ENCODE measurements at regions of chr10 and their contacts with region 1.

Region 1: GRCh38 chr10:113891476-113891875 is 37.0 kb downstream of the NHLRC2 start:
- DNase-seq: no peak
- H3K4me3 Mint-ChIP-seq: no peak overlapping the region
- H3K27ac Mint-ChIP-seq: no peak overlapping the region
- H3K4me1 Mint-ChIP-seq: peaks cover 7% of the 10 kb centered on the region
- H3K27me3 Mint-ChIP-seq: no peaks in the 10 kb centered on the region
- CTCF ChIP-seq: no peak

Region 2: GRCh38 chr10:114068054-114068707 is 176.7 kb after region 1 on chr10:
- CTCF ChIA-PET with region 1: no interaction called
- POLR2A ChIA-PET with region 1: interaction called, 4 read pairs
- intact Hi-C with region 1: loop called (anchors 10 kb)
- DNase-seq: peak; percentile 81
- H3K4me3 Mint-ChIP-seq: peak overlapping the region; percentile 61
- H3K27ac Mint-ChIP-seq: peak overlapping the region; percentile 36
- H3K4me1 Mint-ChIP-seq: peaks cover 14% of the 10 kb centered on the region
- H3K27me3 Mint-ChIP-seq: no peaks in the 10 kb centered on the region
- CTCF ChIP-seq: no peak

Region 3: DNA sequence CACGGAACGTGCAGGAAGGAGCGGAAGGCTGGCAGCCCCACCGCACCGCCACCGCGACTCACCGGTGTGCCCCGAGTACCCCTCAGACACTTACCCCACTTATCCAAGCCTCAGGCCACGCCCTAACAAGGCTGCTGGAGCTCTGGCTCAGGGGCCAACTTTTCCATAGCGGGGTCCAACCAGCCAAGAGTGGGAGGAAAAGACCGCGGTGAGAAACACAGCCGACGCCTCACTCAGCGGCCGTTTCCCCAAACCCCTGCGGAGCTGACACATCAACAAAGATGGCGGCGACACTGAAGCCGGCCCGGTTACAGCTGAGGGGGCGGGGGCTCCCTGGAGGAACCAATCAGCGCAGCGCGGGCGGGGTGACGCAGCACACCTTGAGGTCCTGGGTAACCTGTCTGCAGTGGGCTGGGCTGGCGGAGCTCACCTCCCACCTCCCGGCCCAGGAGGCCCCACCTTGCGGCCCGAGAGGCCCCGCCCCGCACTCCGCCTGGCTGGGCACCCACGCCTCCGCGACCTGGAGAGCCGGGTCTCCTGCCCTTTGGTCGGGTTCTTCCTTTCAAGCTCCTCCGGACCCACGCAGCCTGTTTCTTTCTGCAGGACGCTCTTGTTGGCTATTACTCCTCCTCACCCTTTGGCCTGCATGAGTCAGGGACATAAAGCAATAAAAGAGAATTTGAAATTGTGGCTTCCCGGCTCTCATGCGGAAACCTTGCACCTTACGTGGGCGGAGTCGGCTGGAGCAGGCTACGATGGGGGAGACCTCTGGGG is 282.6 kb after region 1 on chr10 and contains the start of gene CCDC186:
- CTCF ChIA-PET with region 1: no interaction called
- POLR2A ChIA-PET with region 1: no interaction called
- intact Hi-C with region 1: no loop called
- DNase-seq: peak; percentile 96
- H3K4me3 Mint-ChIP-seq: peak within 1 kb of the TSS; percentile 97
- H3K27ac Mint-ChIP-seq: peak within 1 kb of the TSS; percentile 99
- H3K4me1 Mint-ChIP-seq: peaks cover 6% of the 10 kb centered on the region
- H3K27me3 Mint-ChIP-seq: no peaks in the 10 kb centered on the region
- CTCF ChIP-seq: no peak
- total RNA-seq, gene CCDC186: 20.6 and 20.9 TPM in 2 replicates

Region 4: GRCh38 chr10:114623661-114624294 is 732.3 kb after region 1 on chr10:
- CTCF ChIA-PET with region 1: no interaction called
- POLR2A ChIA-PET with region 1: no interaction called
- intact Hi-C with region 1: no loop called
- DNase-seq: peak; percentile 89
- H3K4me3 Mint-ChIP-seq: no peak overlapping the region
- H3K27ac Mint-ChIP-seq: peak overlapping the region; percentile 88
- H3K4me1 Mint-ChIP-seq: peaks cover 42% of the 10 kb centered on the region
- H3K27me3 Mint-ChIP-seq: no peaks in the 10 kb centered on the region
- CTCF ChIP-seq: no peak

Measured in MCF 10A (cell line).